ENCODE measurements at regions of chr1 and their contacts with region 1.

Region 1: GRCh38 chr1:100265931-100266740 is at the start of gene RTCA:
- DNase-seq: peak; percentile 96
- ATAC-seq: peak; percentile 95
- H3K4me3 Mint-ChIP-seq: peak within 1 kb of the TSS; percentile 97
- H3K27ac Mint-ChIP-seq: peak within 1 kb of the TSS; percentile 98
- H3K4me1 Mint-ChIP-seq: peaks cover 35% of the 10 kb centered on the region
- H3K27me3 Mint-ChIP-seq: no peaks in the 10 kb centered on the region
- CTCF ChIP-seq: no peak
- total RNA-seq, gene RTCA: 44.7 to 46.0 TPM

Region 2: DNA sequence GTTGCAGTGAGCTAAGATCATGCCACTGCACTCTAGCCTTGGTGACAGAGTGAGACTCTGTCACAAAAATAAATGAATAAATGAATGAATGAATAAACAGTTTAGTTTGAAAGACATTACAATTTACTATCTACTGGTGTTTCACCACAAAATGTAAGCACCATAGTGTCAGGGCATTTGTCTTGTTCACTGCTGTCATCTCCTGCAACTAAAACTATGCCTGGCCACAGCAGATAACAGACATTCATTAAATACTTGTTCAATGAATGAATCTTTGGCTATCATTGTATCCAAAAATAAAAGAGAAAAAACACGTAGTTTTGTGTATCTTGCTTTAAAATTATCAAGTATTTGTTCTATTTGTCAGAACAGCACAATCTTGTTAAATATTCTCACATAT is 165.9 kb before region 1 on chr1:
- CTCF ChIA-PET with region 1: no interaction called
- POLR2A ChIA-PET with region 1: no interaction called
- intact Hi-C with region 1: no loop called
- DNase-seq: no peak
- ATAC-seq: no peak
- H3K4me3 Mint-ChIP-seq: no peak overlapping the region
- H3K27ac Mint-ChIP-seq: no peak overlapping the region
- H3K4me1 Mint-ChIP-seq: no peaks in the 10 kb centered on the region
- H3K27me3 Mint-ChIP-seq: no peaks in the 10 kb centered on the region
- CTCF ChIP-seq: no peak

Region 3: GRCh38 chr1:100147875-100148274 is 118.3 kb before region 1 on chr1:
- CTCF ChIA-PET with region 1: no interaction called
- POLR2A ChIA-PET with region 1: interaction called, 4 read pairs
- intact Hi-C with region 1: loop called (anchors 10 kb)
- DNase-seq: no peak
- ATAC-seq: no peak
- H3K4me3 Mint-ChIP-seq: no peak overlapping the region
- H3K27ac Mint-ChIP-seq: no peak overlapping the region
- H3K4me1 Mint-ChIP-seq: peaks cover 7% of the 10 kb centered on the region
- H3K27me3 Mint-ChIP-seq: no peaks in the 10 kb centered on the region
- CTCF ChIP-seq: no peak

Region 4: GRCh38 chr1:100249537-100250257 is 16.4 kb before region 1 on chr1 and contains the start of gene DBT:
- CTCF ChIA-PET with region 1: interaction called, 4 read pairs
- POLR2A ChIA-PET with region 1: interaction called, 22 read pairs
- intact Hi-C with region 1: no loop called
- DNase-seq: peak; percentile 96
- ATAC-seq: peak; percentile 100
- H3K4me3 Mint-ChIP-seq: no peak within 1 kb of the TSS
- H3K27ac Mint-ChIP-seq: no peak within 1 kb of the TSS
- H3K4me1 Mint-ChIP-seq: peaks cover 13% of the 10 kb centered on the region
- H3K27me3 Mint-ChIP-seq: no peaks in the 10 kb centered on the region
- CTCF ChIP-seq: no peak
- total RNA-seq, gene DBT: 11.8 to 12.6 TPM

Region 5: DNA sequence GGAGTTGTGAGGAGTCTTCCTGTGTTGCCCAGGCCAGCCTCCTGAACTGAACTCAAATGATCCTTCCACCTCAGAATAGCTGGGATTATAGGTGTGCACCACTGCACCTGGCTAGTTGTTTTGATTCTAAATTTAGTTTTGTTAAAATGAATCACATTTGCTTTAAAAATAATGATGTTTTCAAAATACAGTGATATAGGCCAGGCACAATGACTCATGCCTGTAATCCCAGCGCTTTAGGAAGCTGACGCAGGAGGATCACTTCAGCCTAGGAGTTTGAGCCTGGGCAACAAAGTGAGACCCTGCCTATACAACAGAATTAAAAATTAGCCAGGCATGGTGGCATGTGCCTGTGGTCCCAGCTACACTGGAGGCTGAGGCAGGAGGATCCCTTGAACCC is 24.2 kb after region 1 on chr1:
- CTCF ChIA-PET with region 1: no interaction called
- POLR2A ChIA-PET with region 1: interaction called, 10 read pairs
- intact Hi-C with region 1: no loop called
- DNase-seq: no peak
- ATAC-seq: no peak
- H3K4me3 Mint-ChIP-seq: no peak overlapping the region
- H3K27ac Mint-ChIP-seq: peak overlapping the region; percentile 34
- H3K4me1 Mint-ChIP-seq: peaks cover 3% of the 10 kb centered on the region
- H3K27me3 Mint-ChIP-seq: no peaks in the 10 kb centered on the region
- CTCF ChIP-seq: no peak